ENCODE measurements at regions of chr6 and their contacts with region 1.

Region 1: GRCh38 chr6:34887753-34888513 is at the start of gene TAF11:
- DNase-seq: peak; percentile 97
- H3K4me3 ChIP-seq: peak within 1 kb of the TSS; percentile 67 to 89 (median 79)
- H3K27ac ChIP-seq: peak within 1 kb of the TSS; percentile 87 to 93 (median 90)
- H3K4me1 ChIP-seq: peaks cover 0 to 38% (median 25%) of the 10 kb centered on the region in 4 donors
- H3K27me3 ChIP-seq: no peaks in the 10 kb centered on the region
- CTCF ChIP-seq: no peak
- EP300 ChIP-seq: peak in 1 of 4 donors; percentile 78
- POLR2A ChIP-seq: peak; percentile 75 to 78
- total RNA-seq, gene TAF11: 31.0 to 37.7 (median 31.4) TPM

Region 2: DNA sequence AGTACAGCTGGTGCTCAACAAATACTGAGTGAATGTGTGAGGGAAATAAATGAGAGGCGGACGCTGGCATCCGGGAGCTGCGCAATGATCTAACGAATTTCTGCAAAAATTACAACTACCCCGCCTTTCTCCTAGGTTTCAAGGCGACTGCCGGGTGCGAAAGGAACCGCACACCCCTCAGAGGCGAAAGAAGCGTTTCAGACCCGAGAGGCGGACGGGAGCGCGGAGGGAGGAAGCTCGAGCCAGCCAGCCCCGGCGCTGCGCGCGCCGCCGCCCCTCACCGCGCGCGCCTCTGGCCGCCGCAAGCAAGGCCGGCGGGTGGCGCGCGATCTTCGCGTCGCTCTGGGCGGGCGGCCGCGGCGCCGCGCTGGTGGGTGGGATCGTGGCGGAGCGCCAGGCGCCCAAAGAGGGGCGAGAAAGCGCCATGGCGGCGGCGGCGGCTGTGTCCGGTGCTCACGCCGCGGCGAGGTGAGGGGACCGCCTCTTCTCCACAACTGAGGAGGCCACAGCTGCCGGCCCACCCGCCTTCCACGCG is 96.2 kb before region 1 on chr6 and contains the start of gene BLTP3A:
- intact Hi-C with region 1: loop called (anchors 2 kb)
- DNase-seq: peak; percentile 76
- H3K4me3 ChIP-seq: peak within 1 kb of the TSS; percentile 68 to 98 (median 79)
- H3K27ac ChIP-seq: peak within 1 kb of the TSS; percentile 91 to 95 (median 92)
- H3K4me1 ChIP-seq: peaks cover 0 to 20% (median 13%) of the 10 kb centered on the region in 4 donors
- H3K27me3 ChIP-seq: no peaks in the 10 kb centered on the region
- CTCF ChIP-seq: no peak
- EP300 ChIP-seq: no peak
- POLR2A ChIP-seq: no peak
- total RNA-seq, gene BLTP3A: 6.7 to 11.6 (median 7.2) TPM

Region 3: GRCh38 chr6:34806738-34807453 is 81.0 kb before region 1 on chr6:
- intact Hi-C with region 1: no loop called
- DNase-seq: no peak
- H3K4me3 ChIP-seq: no peak overlapping the region
- H3K27ac ChIP-seq: no peak overlapping the region
- H3K4me1 ChIP-seq: no peaks in the 10 kb centered on the region
- H3K27me3 ChIP-seq: no peaks in the 10 kb centered on the region
- CTCF ChIP-seq: no peak
- EP300 ChIP-seq: no peak
- POLR2A ChIP-seq: no peak

Region 4: DNA sequence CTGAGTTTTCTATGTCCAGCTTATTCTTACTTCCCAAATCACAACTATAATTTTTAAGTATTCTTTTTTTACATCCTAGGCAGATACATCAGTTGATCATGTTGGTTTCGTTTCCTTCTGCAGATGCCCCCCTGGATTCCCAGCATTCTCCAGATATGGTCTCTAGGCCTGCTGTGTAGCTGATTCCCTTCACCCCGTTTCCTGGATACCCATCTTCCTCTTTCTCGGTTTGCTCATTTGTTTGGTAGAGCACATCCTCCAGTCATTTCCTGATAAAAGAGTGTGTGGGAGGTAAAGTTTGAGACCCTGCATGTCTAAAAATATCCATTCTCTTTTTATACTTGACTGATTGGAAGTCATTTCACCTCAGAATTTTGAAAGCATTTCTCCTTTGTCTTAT is 67.5 kb after region 1 on chr6:
- intact Hi-C with region 1: loop called (anchors 5 kb)
- DNase-seq: no peak
- H3K4me3 ChIP-seq: no peak overlapping the region
- H3K27ac ChIP-seq: peak overlapping the region in 1 of 4 donors; percentile 56
- H3K4me1 ChIP-seq: peaks cover 0 to 62% (median 47%) of the 10 kb centered on the region in 4 donors
- H3K27me3 ChIP-seq: no peaks in the 10 kb centered on the region
- CTCF ChIP-seq: no peak
- EP300 ChIP-seq: no peak
- POLR2A ChIP-seq: no peak

Measured in sigmoid colon (tissue), 7 donors.